ENCODE measurements at regions of chr17 and their contacts with region 1.

Region 1: DNA sequence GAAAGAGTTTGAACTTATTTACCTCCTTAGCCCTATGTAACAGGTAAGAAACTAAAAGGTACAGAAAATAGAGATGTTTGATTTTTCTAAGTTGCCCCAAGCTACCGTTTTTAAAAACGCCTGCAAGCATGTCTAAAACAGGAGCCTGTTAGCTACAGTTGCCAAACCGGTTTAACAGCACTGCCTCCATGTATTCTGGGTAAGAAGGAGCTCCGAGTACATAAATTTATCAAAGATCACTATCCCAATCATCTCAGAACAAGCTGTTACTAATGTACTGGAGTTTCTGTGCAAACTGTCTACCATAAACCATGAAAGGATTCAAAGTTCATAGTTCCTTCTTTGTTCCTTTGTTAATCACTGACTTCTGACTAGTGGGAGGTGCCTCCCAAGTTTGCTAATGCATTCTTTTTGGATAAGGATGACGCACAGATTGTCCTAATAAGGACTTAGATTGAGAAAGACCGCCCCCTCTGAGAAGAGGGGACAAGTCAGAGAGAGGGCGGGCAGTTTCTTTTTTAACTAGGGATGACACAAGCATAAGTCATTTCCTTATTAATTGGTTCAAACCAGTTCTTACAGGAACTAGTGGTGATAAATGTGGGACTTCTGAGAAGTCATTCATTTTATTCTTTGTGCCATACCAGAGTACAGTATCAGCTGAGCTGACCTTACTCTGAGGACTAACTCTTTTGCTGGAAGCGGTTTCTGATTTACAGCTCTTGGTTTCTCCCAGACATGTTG is 55.3 kb downstream of the TUBD1 start:
- DNase-seq: peak; percentile 100
- H3K4me3 ChIP-seq: peak overlapping the region; percentile 96
- H3K27ac ChIP-seq: peak overlapping the region; percentile 99
- H3K4me1 ChIP-seq: peaks cover 27% of the 10 kb centered on the region
- H3K27me3 ChIP-seq: no peaks in the 10 kb centered on the region

Region 2: GRCh38 chr17:59753522-59754467 is 83.7 kb before region 1 on chr17:
- in situ Hi-C with region 1: loop called (anchors 10 kb)
- DNase-seq: peak; percentile 86
- H3K4me3 ChIP-seq: peak overlapping the region; percentile 65
- H3K27ac ChIP-seq: peak overlapping the region; percentile 89
- H3K4me1 ChIP-seq: peaks cover 58% of the 10 kb centered on the region
- H3K27me3 ChIP-seq: no peaks in the 10 kb centered on the region